Transverse colon (tissue), 4 donors: ENCODE measurements at regions of chr12 and their contacts with region 1.

Region 1: DNA sequence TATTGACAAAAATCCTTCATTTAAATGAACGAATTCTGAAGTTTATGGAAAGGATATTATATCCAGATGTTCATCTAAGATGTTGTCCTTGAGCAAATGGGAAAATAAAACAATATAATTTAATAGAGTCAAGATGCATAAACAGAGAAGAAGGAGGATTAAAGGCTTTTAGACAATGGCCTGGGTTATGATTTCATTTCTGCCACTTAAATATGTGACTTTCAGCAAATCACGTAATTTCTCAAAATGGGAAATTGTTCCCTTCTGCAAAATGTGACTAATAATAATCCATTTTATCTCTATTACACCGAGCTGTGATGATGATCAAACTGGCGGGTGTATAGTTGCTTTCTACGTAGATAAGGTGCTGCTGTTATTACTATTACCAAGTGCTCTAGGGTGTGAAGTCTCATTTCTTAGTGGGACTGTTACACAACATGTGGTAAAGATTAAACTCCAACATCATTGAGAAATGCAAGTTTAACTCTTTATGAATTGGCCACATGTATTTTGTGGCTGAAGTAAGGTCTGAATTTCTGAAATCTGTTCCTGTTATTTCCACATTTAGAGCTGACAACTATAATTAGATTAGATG is 157.0 kb downstream of the MYRFL start:
- DNase-seq: no peak
- H3K4me3 ChIP-seq: no peak overlapping the region
- H3K27ac ChIP-seq: no peak overlapping the region
- H3K4me1 ChIP-seq: peaks cover 0 to 1% (median 0%) of the 10 kb centered on the region in 4 donors
- H3K27me3 ChIP-seq: no peaks in the 10 kb centered on the region
- CTCF ChIP-seq: no peak
- EP300 ChIP-seq: no peak
- POLR2A ChIP-seq: no peak

Region 2: DNA sequence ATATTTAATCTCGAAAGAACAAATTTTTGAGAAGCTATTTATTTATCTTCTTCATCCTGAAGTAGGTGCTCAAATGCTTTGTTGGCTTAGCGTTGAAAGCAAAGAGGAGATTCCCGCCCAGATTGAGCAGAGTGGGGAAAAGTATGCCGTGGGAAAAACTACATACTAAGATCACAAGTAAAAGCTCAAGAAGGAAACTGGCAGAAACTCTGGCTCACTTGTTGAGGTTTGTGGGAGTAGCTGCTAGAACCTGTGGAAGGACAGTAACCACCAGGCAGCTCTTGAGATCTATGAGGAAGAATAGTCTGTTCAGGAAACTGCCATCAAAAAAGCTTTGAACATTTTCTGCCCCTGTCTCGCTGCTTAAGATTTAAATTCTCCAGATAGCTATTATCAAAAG is 153.1 kb before region 1 on chr12:
- in situ Hi-C with region 1: no loop called
- intact Hi-C with region 1: loop called (anchors 5 kb)
- DNase-seq: no peak
- H3K4me3 ChIP-seq: no peak overlapping the region
- H3K27ac ChIP-seq: no peak overlapping the region
- H3K4me1 ChIP-seq: peaks cover 0 to 7% (median 2%) of the 10 kb centered on the region in 4 donors
- H3K27me3 ChIP-seq: no peaks in the 10 kb centered on the region
- CTCF ChIP-seq: no peak
- EP300 ChIP-seq: no peak
- POLR2A ChIP-seq: no peak